HCT116 (cell line): ENCODE measurements at regions of chr6 and their contacts with region 1.

Region 1: DNA sequence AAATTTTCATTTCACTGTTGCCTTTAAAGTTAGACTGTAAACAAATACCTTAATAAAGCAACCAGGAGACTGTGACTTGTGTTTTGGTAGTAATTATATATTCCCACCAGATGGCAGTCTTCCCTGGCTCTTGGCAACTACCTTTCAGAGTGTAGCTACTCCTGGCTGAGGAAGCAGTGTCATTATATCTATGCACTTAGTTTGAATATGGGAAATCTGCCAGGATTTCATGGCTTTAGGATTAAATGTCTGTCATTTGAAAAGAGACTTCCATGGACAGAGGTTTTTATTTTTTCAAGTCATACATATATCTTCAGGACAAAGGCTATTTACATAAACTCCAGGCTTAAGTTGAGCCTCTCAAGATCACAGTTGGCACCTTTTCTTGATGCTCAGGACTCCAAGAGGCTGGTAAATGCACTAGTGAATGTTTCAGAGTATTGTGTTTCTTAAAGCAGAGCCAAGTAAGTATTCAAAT is 160.1 kb downstream of the C6orf58 start:
- DNase-seq: peak; percentile 74
- ATAC-seq: peak; percentile 99
- H3K4me3 ChIP-seq: no peak overlapping the region
- H3K27ac ChIP-seq: no peak overlapping the region
- H3K4me1 ChIP-seq: no peaks in the 10 kb centered on the region
- H3K27me3 ChIP-seq: no peaks in the 10 kb centered on the region
- CTCF ChIP-seq: peak; percentile 47 to 76 (median 67); a peak in 5 of 6 replicates
- POLR2A ChIP-seq: no peak
- RAD21 ChIP-seq: peak; percentile 93

Region 2: GRCh38 chr6:127748290-127748689 is 11.2 kb after region 1 on chr6:
- CTCF ChIA-PET with region 1: interaction called, 11 read pairs
- POLR2A ChIA-PET with region 1: no interaction called
- RAD21 ChIA-PET with region 1: no interaction called
- intact Hi-C with region 1: no loop called
- DNase-seq: no peak
- ATAC-seq: no peak
- H3K4me3 ChIP-seq: no peak overlapping the region
- H3K27ac ChIP-seq: no peak overlapping the region
- H3K4me1 ChIP-seq: no peaks in the 10 kb centered on the region
- H3K27me3 ChIP-seq: no peaks in the 10 kb centered on the region
- CTCF ChIP-seq: no peak
- POLR2A ChIP-seq: no peak
- RAD21 ChIP-seq: no peak

Region 3: GRCh38 chr6:128520436-128521281 is 783.6 kb after region 1 on chr6 and contains the start of gene PTPRK:
- CTCF ChIA-PET with region 1: interaction called, 5 read pairs
- POLR2A ChIA-PET with region 1: interaction called, 4 read pairs
- RAD21 ChIA-PET with region 1: no interaction called
- intact Hi-C with region 1: loop called (anchors 2 kb)
- DNase-seq: peak; percentile 76
- ATAC-seq: peak; percentile 87
- H3K4me3 ChIP-seq: peak within 1 kb of the TSS; percentile 86 to 92
- H3K27ac ChIP-seq: peak within 1 kb of the TSS; percentile 84
- H3K4me1 ChIP-seq: peaks cover 10 to 22% of the 10 kb centered on the region in 2 experiments; a peak in 3 of 4 replicates
- H3K27me3 ChIP-seq: no peaks in the 10 kb centered on the region
- CTCF ChIP-seq: peak in 2 of 3 experiments; percentile 21 to 42; a peak in 2 of 6 replicates
- POLR2A ChIP-seq: peak; percentile 60
- RAD21 ChIP-seq: no peak
- total RNA-seq, gene PTPRK: 34.2 TPM

Region 4: DNA sequence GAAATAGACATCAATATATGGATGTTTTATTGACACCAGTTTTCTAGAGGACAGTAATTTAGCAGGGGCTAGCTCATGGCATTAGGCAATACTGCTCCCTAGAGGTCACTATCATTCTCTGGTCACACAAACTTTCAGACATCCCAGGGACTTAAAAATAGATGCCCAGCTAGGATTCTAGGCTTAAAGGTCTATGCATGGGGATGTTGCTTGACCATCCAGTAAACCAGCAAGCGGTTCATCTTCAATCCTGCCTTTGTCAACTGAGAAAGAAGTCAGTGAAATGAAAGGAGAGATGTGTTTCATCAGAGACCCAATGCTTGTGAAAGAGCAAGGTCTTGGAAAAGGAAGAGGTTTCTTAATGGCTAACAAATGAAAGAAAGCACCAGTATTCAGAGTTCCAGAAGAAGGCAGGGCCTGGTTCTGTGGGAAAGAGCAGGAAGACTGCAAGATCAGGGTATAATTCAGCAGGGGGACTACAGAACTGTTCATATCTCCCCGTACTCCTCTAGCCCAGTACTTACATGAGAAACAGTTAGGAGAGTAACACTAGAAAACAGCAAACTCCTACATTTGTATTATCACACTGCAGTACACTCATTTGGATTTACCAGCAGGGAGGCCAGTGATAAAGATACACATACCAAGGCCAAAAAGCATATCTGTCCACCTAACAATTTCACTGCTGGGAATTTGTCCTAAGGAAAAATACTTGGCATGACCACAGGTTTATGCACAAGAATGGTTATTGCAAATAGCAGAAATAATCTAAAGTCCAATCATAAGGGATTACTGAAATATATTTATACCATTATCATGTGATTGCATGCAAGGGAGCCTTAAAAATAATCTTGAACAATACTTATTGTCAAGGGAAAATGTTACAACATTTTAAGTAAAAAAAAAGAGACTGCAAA is 994.5 kb after region 1 on chr6:
- CTCF ChIA-PET with region 1: interaction called, 21 read pairs
- POLR2A ChIA-PET with region 1: no interaction called
- RAD21 ChIA-PET with region 1: interaction called in 1 of 2 experiments, 7 read pairs
- intact Hi-C with region 1: loop called (anchors 1 kb)
- DNase-seq: peak; percentile 40
- ATAC-seq: peak; percentile 88
- H3K4me3 ChIP-seq: no peak overlapping the region
- H3K27ac ChIP-seq: no peak overlapping the region
- H3K4me1 ChIP-seq: no peaks in the 10 kb centered on the region
- H3K27me3 ChIP-seq: no peaks in the 10 kb centered on the region
- CTCF ChIP-seq: peak; percentile 55 to 74 (median 67)
- POLR2A ChIP-seq: no peak
- RAD21 ChIP-seq: peak; percentile 88

Region 5: GRCh38 chr6:129251669-129252376 is 1514.8 kb after region 1 on chr6:
- CTCF ChIA-PET with region 1: no interaction called
- POLR2A ChIA-PET with region 1: no interaction called
- RAD21 ChIA-PET with region 1: no interaction called
- intact Hi-C with region 1: loop called (anchors 5 kb)
- DNase-seq: peak; percentile 73
- ATAC-seq: peak; percentile 93
- H3K4me3 ChIP-seq: no peak overlapping the region
- H3K27ac ChIP-seq: no peak overlapping the region
- H3K4me1 ChIP-seq: peaks cover 3 to 10% of the 10 kb centered on the region in 2 experiments; a peak in 3 of 4 replicates
- H3K27me3 ChIP-seq: no peaks in the 10 kb centered on the region
- CTCF ChIP-seq: peak; percentile 64 to 87 (median 75); a peak in 5 of 6 replicates
- POLR2A ChIP-seq: no peak
- RAD21 ChIP-seq: peak; percentile 90

Region 6: DNA sequence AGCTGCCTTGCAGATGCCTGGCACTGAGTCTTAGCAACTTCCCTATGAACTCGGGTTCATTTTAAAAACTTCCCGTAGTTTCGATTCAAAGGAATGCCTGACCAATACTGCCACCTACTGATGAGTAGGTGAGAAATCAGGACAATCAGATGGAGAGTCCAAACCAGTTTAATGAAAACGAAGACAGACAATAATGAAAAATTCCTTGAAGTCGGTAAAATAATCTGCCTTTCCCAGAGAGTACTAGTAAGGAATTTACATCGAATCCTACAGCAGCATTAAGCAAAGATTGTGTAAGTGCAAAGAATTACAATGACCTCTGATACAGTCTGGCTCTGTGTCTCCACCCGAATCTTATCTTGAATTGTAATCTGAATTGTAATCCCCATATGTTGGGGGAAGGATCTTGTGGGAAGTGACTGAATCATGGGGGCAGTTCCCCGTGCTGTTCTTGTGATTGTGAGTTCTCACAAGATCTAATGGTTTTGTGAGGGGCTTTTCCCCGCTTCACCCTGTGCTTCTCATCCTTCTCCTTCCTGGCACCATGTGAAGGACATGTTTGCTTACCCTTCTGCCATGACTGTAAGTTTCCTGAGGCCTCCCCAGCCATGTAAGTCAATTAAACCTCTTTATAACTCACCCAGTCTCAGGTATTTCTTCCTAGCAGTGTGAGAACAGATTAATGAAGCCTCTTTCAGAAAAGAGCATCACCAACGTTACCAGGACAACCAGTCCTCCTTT is 1838.5 kb after region 1 on chr6:
- CTCF ChIA-PET with region 1: no interaction called
- POLR2A ChIA-PET with region 1: no interaction called
- RAD21 ChIA-PET with region 1: no interaction called
- intact Hi-C with region 1: loop called (anchors 10 kb)
- DNase-seq: peak; percentile 27
- ATAC-seq: peak; percentile 89
- H3K4me3 ChIP-seq: no peak overlapping the region
- H3K27ac ChIP-seq: peak overlapping the region; percentile 40
- H3K4me1 ChIP-seq: peaks cover 12 to 13% of the 10 kb centered on the region in 2 experiments; a peak in 3 of 4 replicates
- H3K27me3 ChIP-seq: no peaks in the 10 kb centered on the region
- CTCF ChIP-seq: peak; percentile 55 to 80 (median 68); a peak in 5 of 6 replicates
- POLR2A ChIP-seq: no peak
- RAD21 ChIP-seq: peak; percentile 85